ENCODE measurements at regions of chrX and their contacts with region 1.

Region 1: DNA sequence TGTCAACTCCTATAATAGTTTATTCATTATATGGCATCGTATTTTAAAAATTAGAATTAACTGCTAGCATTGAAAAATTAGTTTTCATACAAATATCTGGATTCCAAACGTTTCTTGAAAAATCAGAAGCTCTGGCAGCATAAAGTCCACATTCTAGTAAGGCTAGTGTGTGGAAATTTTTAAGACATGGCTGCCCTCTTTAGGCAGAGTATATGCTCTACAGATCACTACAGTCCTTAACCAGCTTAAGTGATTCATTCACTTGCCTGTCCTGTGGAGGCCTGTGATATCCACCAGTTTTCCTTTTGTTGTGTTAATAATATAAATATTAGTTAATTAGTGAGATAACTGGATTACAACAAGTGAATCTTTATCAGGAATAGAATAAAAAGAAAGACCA is 287.2 kb downstream of the OPHN1 start:
- DNase-seq: no peak
- ATAC-seq: peak; percentile 87
- H3K4me3 ChIP-seq: no peak overlapping the region
- H3K27ac ChIP-seq: no peak overlapping the region
- H3K4me1 ChIP-seq: no peaks in the 10 kb centered on the region
- H3K27me3 ChIP-seq: no peaks in the 10 kb centered on the region
- CTCF ChIP-seq: peak; percentile 48; the same call in 1 of the 2 replicates

Region 2: GRCh38 chrX:66760657-66761056 is 1385.4 kb before region 1 on chrX:
- CTCF ChIA-PET with region 1: no interaction called
- POLR2A ChIA-PET with region 1: no interaction called
- in situ Hi-C with region 1: no loop called
- intact Hi-C with region 1: loop called (anchors 5 kb)
- DNase-seq: no peak
- ATAC-seq: no peak
- H3K4me3 ChIP-seq: no peak overlapping the region
- H3K27ac ChIP-seq: no peak overlapping the region
- H3K4me1 ChIP-seq: no peaks in the 10 kb centered on the region
- H3K27me3 ChIP-seq: no peaks in the 10 kb centered on the region
- CTCF ChIP-seq: peak; percentile 18; the same call in 1 of the 2 replicates

Region 3: GRCh38 chrX:68719904-68720614 is 574.0 kb after region 1 on chrX:
- CTCF ChIA-PET with region 1: no interaction called
- POLR2A ChIA-PET with region 1: no interaction called
- in situ Hi-C with region 1: no loop called
- intact Hi-C with region 1: no loop called
- DNase-seq: no peak
- ATAC-seq: 0 out of 2 replicates have a peak, but pooled peaks have one; percentile 78
- H3K4me3 ChIP-seq: no peak overlapping the region
- H3K27ac ChIP-seq: no peak overlapping the region
- H3K4me1 ChIP-seq: no peaks in the 10 kb centered on the region
- H3K27me3 ChIP-seq: no peaks in the 10 kb centered on the region
- CTCF ChIP-seq: no peak; the same call in 1 of the 2 replicates

Measured in Panc1 (cell line).